RWPE1 (cell line): ENCODE measurements at regions of chr17 and their contacts with region 1.

Region 1: DNA sequence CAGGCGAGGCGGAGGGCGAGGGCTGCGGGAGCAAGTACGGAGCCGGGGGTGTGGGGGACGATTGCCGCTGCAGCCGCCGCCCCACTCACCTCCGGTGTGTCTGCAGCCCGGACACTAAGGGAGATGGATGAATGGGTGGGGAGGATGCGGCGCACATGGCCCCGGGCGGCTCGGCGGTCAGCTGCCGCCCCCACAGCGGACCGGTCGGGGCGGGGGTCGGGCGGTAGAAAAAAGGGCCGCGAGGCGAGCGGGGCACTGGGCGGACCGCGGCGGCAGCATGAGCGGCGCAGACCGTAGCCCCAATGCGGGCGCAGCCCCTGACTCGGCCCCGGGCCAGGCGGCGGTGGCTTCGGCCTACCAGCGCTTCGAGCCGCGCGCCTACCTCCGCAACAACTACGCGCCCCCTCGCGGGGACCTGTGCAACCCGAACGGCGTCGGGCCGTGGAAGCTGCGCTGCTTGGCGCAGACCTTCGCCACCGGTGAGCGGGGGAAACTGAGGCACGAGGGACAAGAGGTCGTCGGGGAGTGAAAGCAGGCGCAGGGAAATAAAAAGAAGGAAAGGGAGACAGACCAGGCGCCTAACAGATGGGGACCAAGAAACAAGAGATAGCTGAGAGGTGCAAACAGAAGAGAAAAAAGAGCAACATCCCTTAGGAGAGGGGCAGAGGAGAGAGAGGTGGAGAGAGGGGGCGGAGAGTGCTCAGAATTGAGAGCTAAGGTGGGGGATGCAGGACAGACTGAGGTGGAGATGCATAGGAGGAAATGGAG is at the start of gene PNMT:
- DNase-seq: peak; percentile 41
- H3K27ac ChIP-seq: no peak within 1 kb of the TSS
- CTCF ChIP-seq: peak; percentile 75

Region 2: DNA sequence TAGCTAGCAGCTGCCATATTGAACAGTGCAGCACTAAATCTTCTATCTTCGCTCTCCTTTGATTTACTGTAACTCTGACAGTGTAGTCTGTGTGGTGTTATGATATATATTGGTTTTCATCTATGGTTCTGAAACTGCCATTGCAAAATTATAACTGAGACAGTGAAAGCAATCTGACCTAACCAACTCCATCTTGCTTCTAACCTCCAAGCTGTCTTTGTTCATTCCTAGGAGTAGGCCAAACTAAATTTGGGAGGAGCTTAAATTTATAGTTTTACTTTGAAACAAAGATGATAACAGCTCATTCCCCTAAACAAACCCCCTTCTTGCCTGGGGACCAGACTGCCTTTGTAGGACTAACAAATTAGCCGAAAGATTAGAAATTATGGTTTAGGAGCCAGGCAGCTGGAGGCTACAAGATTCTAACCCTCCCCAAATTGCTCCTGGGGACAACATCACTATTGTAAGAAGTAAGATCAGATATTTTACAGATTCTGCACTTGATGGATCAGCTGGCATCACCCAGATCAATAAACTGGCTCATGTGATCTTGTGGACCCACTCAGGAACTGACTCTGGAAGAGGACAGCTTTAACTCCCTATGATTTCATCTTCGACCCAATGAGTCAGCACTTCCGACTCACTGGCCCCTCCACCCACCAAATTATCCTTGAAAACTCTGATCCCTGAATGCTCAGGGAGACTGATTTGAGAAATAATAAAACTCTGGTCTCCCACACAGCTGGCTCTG is 654.2 kb before region 1 on chr17:
- CTCF ChIA-PET with region 1: no interaction called
- POLR2A ChIA-PET with region 1: no interaction called
- DNase-seq: no peak
- H3K27ac ChIP-seq: 0 out of 2 replicates have a peak overlapping the region, but pooled peaks have one; percentile 29
- CTCF ChIP-seq: no peak

Region 3: DNA sequence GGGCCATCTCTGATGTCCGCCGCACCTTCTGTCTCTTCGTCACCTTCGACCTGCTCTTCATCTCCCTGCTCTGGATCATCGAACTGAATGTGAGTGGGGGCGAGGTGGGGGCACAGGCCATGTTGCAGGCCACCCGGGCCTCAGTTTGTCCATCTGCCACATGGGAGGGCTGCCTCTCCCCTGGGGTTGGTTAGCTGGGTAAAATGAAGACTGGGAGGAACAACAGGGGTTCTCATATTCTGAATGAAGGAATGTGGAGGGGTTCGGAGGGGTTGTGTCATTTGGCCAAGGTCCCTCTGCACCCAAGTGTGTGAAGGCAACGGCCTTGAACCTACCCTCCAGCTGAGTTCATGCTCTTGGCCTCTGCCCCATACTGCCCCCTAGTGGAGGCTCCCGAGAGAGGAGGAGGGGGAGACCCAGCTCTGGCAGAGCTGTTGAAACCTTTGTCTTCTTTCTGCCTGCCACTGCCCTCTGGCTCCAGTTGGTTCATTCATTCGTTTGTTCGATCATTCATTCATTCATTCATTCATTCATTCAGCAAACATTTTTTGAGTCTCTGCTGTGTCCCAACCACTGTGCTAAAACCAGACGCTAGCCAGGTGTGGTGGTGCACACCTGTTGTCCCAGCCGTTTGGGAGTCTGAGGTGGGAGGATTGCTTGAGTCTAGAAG is 14.6 kb before region 1 on chr17:
- CTCF ChIA-PET with region 1: interaction called, 25 read pairs
- POLR2A ChIA-PET with region 1: no interaction called
- DNase-seq: peak; percentile 49
- H3K27ac ChIP-seq: no peak overlapping the region; the same call in 1 of the 2 replicates
- CTCF ChIP-seq: peak; percentile 80